ENCODE measurements at regions of chr1 and their contacts with region 1.

Region 1: GRCh38 chr1:151534665-151535278 is 5.3 kb upstream of the TUFT1 start:
- DNase-seq: peak; percentile 88
- H3K4me3 Mint-ChIP-seq: no peak overlapping the region
- H3K27ac Mint-ChIP-seq: no peak overlapping the region
- H3K4me1 Mint-ChIP-seq: peaks cover 2% of the 10 kb centered on the region
- H3K27me3 Mint-ChIP-seq: no peaks in the 10 kb centered on the region

Region 2: DNA sequence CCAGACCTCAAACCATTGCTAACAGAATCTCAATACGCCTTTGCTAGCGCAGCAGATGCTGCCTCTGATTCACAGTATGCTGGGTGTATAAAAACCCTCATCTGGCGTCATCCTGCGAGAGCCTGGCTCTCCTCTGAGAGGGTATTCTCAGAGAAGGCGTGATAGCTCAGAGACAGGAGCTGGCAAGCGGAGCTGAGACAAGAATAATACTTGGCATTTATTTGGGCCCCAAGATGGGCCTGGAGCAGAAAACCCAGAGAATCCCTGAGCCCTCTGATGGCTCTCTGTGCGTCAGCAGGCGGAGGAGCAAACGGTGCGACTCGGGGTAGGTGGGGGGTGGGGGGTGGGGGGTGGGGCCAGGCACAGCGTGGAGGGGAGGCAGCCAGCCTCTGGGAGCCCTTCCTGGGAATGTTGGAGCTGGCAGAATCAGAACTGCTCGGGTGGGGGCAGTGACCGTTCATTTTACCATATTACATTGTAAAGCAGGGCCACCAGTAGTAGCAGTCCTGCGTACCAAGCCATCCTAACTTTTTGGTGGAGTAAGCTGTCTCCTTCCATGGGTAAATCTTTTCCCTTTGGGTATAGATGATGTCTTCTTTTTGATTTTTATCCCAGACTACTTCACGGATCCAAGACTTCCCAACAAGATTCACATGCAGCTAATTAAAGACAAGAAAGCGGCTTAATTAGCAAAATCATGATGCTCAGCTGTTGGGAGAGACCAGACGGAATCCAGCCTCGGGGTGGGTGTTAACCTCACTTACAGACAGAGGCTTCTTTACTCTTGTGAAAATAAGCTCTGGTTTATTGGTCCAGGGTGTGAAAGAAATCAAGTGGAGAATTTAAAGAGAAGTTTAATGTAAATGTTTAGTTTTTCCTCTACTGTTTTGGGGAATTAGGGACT is 193.6 kb after region 1 on chr1:
- CTCF ChIA-PET with region 1: interaction called, 15 read pairs
- POLR2A ChIA-PET with region 1: no interaction called
- intact Hi-C with region 1: no loop called
- DNase-seq: no peak
- H3K4me3 Mint-ChIP-seq: no peak overlapping the region
- H3K27ac Mint-ChIP-seq: no peak overlapping the region
- H3K4me1 Mint-ChIP-seq: no peaks in the 10 kb centered on the region
- H3K27me3 Mint-ChIP-seq: peaks cover 41% of the 10 kb centered on the region

Region 3: DNA sequence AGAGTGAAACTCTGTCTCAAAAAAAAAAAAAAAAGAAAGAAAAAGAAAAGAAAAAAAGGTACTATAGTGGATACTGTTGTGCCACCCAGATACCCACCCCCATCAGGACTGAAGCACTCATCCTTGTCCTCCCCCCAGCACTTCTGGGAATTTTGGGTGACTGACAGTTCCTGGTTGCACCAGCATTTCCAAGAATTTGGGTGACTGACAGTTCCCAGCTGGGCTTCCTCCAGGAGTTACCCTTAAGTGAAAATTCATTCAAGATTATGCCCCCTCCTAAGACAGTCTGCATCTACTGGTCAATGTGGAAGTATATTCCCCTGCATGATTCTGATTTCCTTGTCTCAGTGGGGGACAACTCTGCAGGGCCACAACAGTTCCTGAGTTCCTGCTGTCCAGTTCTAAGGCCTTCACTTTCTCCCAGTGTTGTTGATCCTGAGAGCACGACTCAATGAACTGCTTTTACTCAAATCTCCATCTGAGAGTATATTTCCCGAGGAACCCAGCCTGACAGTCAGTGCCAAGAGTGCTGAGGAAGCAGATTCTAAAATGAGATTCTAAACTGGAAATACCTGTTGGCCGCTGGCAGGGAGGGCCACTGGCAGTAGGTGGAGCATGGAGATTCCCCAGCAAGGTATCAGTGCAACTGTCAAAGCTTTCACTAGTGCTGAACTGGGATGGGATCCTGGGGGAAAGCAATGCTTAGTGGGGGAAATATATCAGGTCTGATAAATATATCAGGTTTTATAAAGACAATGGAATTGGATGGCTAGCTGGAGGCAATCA is 205.0 kb after region 1 on chr1:
- CTCF ChIA-PET with region 1: interaction called, 15 read pairs
- POLR2A ChIA-PET with region 1: no interaction called
- intact Hi-C with region 1: loop called (anchors 2 kb)
- DNase-seq: no peak
- H3K4me3 Mint-ChIP-seq: no peak overlapping the region
- H3K27ac Mint-ChIP-seq: no peak overlapping the region
- H3K4me1 Mint-ChIP-seq: peaks cover 5% of the 10 kb centered on the region
- H3K27me3 Mint-ChIP-seq: no peaks in the 10 kb centered on the region

Region 4: DNA sequence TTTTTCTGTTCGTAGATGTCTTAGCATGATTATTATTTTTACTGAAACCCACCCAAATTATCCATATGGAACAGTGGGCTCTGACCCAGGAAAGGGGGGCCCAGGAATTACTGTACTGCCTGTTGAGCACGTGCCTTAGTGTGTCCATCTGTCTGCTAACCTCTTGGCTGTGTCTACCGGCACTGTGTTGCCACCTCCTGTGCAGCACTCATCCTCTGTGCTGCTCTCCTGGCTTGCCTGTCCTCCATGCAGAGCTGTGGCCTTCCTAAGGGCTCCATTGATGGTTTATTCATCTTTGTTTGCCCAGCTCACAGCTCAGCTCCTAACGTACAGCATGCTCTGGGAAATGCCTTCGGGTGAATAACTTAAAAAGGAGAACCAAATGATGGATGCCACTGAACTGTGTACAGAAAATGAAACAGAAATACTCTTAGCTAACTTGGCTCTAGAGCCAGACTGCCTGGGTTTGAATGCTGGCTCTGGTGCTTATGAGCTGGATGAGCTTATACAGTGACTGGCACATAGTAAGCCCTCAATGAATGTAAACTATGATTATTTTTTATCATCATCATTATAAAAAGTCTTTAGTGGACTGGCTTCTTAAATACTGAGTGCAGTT is 635.6 kb after region 1 on chr1:
- CTCF ChIA-PET with region 1: no interaction called
- POLR2A ChIA-PET with region 1: no interaction called
- intact Hi-C with region 1: no loop called
- DNase-seq: no peak
- H3K4me3 Mint-ChIP-seq: no peak overlapping the region
- H3K27ac Mint-ChIP-seq: no peak overlapping the region
- H3K4me1 Mint-ChIP-seq: peaks cover 7% of the 10 kb centered on the region
- H3K27me3 Mint-ChIP-seq: no peaks in the 10 kb centered on the region

Measured in activated CD4-positive, alpha-beta memory T cell treated with anti-CD3 and anti-CD28 coated beads for 36 hours (primary cell).